GM12878 (cell line): ENCODE measurements at regions of chr10 and their contacts with region 1.

Region 1: GRCh38 chr10:95601116-95601719 is 40.0 kb upstream of the SORBS1 start:
- DNase-seq: peak; percentile 5
- ATAC-seq: peak; percentile 94
- H3K4me3 ChIP-seq: no peak overlapping the region
- H3K27ac ChIP-seq: no peak overlapping the region
- H3K4me1 ChIP-seq: no peaks in the 10 kb centered on the region
- H3K27me3 ChIP-seq: peaks cover 0 to 3% of the 10 kb centered on the region in 2 experiments; a peak in 2 of 4 replicates
- CTCF ChIP-seq: peak; percentile 92 to 95 (median 94)
- EP300 ChIP-seq: no peak
- POLR2A ChIP-seq: no peak
- RAD21 ChIP-seq: peak; percentile 95

Region 2: DNA sequence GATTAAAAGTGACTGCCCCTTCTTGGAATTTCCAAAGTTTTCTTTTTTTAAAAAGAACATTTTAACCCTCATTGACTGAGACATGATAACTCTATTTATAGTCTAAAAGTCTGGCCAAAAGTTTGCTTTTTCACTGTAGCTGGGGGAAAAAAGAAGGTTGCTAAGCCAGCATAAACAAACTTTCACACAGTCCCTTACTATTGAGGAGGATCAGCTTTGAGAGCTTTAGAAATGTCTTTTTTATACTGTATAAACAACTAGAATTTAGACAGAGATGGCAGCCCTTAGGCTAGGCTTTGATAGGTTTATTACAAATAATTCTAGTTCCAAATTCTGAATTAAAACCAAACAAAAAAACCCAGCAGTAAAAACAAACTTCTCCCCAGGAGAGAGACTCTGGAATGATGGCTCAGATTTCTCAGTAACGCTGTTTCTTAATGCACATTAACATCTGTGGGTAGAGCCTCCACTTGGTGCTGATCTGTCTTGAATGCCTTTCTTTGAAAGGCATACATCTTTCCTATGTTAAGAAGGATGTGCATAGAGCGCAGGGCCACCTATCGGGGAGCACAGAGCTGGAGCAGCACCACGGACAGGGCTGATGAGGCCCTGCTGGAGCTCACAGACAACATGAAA is 209.5 kb before region 1 on chr10:
- CTCF ChIA-PET with region 1: interaction called, 12 read pairs
- POLR2A ChIA-PET with region 1: no interaction called
- RAD21 ChIA-PET with region 1: no interaction called
- SMC1A ChIA-PET with region 1: no interaction called
- in situ Hi-C with region 1: no loop called
- intact Hi-C with region 1: no loop called
- DNase-seq: no peak
- ATAC-seq: peak; percentile 32
- H3K4me3 ChIP-seq: no peak overlapping the region
- H3K27ac ChIP-seq: no peak overlapping the region
- H3K4me1 ChIP-seq: peaks cover 51% of the 10 kb centered on the region
- H3K27me3 ChIP-seq: no peaks in the 10 kb centered on the region
- CTCF ChIP-seq: peak in 2 of 3 experiments; percentile 3 to 18; a peak in 1 of 6 replicates
- EP300 ChIP-seq: no peak
- POLR2A ChIP-seq: no peak
- RAD21 ChIP-seq: no peak

Region 3: DNA sequence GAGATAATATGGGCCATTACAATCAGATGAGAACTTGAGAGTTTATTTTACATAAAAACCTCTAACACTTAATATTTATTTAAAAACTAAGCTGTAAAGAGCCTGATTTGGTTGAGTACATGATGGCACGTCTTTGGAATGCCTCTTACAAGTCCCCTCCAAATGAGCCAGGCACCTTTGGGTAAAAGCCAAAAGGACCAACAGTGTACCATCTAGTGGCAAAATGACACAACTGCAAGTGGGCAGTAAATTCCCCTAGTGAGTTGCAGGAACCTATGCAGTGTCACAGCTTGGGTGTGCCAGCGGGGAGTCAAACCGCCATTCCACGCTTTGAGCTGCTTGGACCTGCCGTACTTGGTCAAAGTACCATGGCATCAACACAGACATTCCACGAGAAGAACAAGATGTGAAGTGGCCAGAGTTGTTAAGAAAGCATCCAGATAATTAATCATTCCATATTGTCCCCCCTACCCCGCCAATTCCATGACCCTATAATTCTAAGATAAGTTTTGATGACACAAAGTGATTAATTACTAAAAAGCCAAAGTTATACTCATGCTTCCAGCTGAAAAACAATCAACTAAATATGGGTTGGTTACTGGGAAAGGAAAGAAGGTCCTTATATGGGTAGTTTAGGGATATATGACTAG is 155.3 kb before region 1 on chr10:
- CTCF ChIA-PET with region 1: interaction called, 13 read pairs
- POLR2A ChIA-PET with region 1: no interaction called
- RAD21 ChIA-PET with region 1: interaction called, 3 read pairs
- SMC1A ChIA-PET with region 1: interaction called, 7 read pairs
- in situ Hi-C with region 1: no loop called
- intact Hi-C with region 1: loop called (anchors 5 kb)
- DNase-seq: no peak
- ATAC-seq: peak; percentile 83
- H3K4me3 ChIP-seq: no peak overlapping the region
- H3K27ac ChIP-seq: no peak overlapping the region
- H3K4me1 ChIP-seq: peaks cover 7% of the 10 kb centered on the region
- H3K27me3 ChIP-seq: no peaks in the 10 kb centered on the region; a peak in 2 of 4 replicates
- CTCF ChIP-seq: peak; percentile 85 to 86 (median 86)
- EP300 ChIP-seq: no peak
- POLR2A ChIP-seq: no peak
- RAD21 ChIP-seq: peak; percentile 77